H1 (cell line): ENCODE measurements at regions of chr22 and their contacts with region 1.

Region 1: GRCh38 chr22:36454916-36455570 is 26.4 kb downstream of the TXN2 start:
- DNase-seq: peak; percentile 91 to 98
- H3K4me3 ChIP-seq: peak overlapping the region; percentile 47 to 67 (median 60)
- H3K27ac ChIP-seq: peak overlapping the region; percentile 84; the same call in 1 of the 2 replicates
- H3K4me1 ChIP-seq: peaks cover 7 to 25% (median 12%) of the 10 kb centered on the region in 4 experiments
- H3K27me3 ChIP-seq: no peaks in the 10 kb centered on the region
- CTCF ChIP-seq: peak in 2 of 3 experiments; percentile 9 to 26; a peak in 2 of 4 replicates
- EP300 ChIP-seq: peak in 1 of 2 experiments; percentile 69; a peak in 1 of 3 replicates
- POLR2A ChIP-seq: peak in 1 of 2 experiments; percentile 73; a peak in 2 of 3 replicates
- RAD21 ChIP-seq: peak; percentile 26 to 38; a peak in 3 of 4 replicates

Region 2: DNA sequence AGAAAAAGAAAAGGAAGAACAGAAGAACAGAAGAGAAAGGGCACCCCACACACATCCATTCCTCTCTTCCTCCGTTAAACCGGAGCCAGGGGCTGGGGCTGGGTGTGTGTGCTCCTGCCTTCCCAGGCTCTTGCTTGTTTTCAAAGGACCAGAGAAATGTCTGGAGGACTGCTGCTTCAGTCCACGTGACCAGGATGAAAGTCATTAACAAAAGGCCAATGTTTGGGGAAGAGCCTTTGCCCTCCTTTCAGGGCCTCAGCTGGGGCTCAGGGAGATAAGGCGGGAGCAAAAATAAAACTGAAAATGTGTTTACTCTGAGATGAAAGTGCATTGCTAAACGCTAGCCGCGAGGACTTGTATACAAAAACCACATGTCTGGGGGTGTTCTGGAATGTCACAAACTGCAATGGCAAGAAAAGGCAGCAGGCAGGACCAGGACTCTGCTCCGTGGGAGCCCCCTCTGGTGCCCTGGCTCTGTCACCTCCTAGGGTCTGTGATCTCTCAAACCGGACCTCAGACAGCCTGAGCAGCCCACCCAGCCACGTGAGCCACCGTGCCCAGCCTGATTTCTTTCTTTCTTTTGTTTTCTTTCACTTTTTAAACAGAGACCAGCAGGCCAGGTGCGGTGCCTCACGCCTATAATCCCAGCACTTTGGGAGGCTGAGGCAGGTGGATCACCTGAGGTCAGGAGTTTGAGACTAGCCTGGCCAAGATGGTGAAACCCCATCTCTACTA is 35.7 kb before region 1 on chr22:
- CTCF ChIA-PET with region 1: no interaction called
- POLR2A ChIA-PET with region 1: no interaction called
- DNase-seq: peak in 1 of 2 experiments; percentile 51
- H3K4me3 ChIP-seq: no peak overlapping the region
- H3K27ac ChIP-seq: 0 out of 2 replicates have a peak overlapping the region, but pooled peaks have one; percentile 1
- H3K4me1 ChIP-seq: peaks cover 0 to 6% (median 3%) of the 10 kb centered on the region in 4 experiments; a peak in 6 of 7 replicates
- H3K27me3 ChIP-seq: no peaks in the 10 kb centered on the region
- CTCF ChIP-seq: no peak
- EP300 ChIP-seq: no peak
- POLR2A ChIP-seq: no peak
- RAD21 ChIP-seq: no peak

Region 3: DNA sequence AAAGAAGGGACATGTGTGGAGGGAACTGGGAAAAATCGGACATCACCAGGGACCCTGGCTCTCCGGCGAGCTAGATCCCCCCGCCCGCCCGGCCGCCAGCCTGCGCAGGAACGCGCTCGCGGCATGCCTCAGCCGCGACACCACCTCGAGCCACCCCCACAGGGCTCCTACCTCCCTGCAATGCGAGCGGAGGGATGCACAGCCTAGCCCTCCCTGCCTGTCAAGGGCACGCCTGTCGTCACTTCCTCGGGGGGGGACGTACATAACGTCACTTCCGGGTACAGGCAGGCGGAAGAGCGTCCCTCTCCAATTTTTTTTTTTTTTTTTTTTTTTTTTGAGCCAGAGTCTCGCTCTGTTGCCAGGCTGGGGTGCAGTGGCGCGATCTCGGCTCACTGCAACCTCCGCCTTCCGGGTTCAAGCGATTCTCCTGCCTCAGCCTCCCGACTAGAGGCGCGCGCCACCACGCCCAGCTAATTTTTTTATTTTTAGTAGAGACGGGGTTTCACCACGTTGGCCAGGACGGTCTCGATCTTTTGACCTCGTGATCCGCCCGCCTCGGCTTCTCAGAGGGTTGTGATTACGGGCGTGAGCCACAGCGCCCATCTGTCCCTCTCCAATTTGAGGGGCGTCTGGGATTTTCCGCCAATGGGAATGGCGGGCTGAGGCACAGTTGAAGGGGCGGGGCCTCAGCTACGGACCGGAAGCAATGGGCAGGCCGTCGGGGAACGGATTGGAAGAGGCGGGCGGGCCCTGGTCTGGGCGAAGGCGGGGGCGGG is 26.5 kb after region 1 on chr22 and contains the start of gene TXN2:
- CTCF ChIA-PET with region 1: interaction called, 7 read pairs
- POLR2A ChIA-PET with region 1: interaction called, 11 read pairs
- DNase-seq: peak; percentile 77 to 92
- H3K4me3 ChIP-seq: peak within 1 kb of the TSS; percentile 58 to 97 (median 71)
- H3K27ac ChIP-seq: peak within 1 kb of the TSS; percentile 60
- H3K4me1 ChIP-seq: peaks cover 0 to 5% (median 2%) of the 10 kb centered on the region in 4 experiments; a peak in 4 of 7 replicates
- H3K27me3 ChIP-seq: peaks cover 0 to 7% (median 5%) of the 10 kb centered on the region in 4 experiments; a peak in 5 of 7 replicates
- CTCF ChIP-seq: no peak
- EP300 ChIP-seq: no peak
- POLR2A ChIP-seq: peak; percentile 81 to 91
- RAD21 ChIP-seq: no peak
- total RNA-seq, gene TXN2: 47.5 and 53.8 TPM in 2 replicates